ENCODE measurements at regions of chr4 and their contacts with region 1.

Region 1: DNA sequence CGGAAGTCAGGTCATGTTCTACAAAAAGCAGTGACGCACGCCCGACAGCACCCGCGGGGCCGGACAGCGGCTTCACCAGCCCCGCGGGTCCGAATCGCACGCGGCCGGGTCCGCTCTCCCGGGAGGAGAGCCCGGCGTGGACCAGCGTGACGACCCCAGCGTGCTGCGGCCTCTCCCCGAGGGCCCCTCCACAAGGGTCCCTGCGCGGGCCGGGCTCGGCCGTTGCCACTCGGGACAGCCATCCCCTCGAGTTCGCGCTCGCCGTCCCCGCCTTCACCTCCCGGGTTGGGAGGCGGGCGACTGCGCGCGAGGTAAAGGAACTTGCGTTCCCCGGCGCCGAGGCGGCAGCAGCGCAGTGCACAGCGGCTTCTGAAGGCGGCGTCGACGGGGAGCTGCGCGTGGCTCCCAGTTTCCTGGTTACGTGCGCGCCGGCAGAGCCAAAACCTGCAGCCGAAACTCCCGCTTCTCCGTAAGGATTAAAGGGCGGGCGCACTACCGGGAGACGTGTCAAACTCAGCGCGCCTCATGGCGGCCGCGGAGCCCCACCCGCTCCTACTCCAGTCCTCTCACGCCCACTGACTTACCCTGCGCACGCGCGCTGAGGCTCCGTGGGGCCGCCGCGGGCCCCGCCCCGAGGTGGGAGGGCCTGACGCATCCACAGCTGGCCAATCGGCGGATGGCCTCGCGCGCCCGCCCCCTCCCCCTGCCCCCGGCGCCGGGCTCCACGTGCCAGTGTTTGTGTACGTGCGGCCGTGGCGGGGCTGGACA is 416 bp upstream of the LRP2BP start:
- DNase-seq: peak; percentile 88 to 99
- H3K4me3 ChIP-seq: peak overlapping the region; percentile 91
- H3K27ac ChIP-seq: peak overlapping the region; percentile 98
- H3K4me1 ChIP-seq: peaks cover 16% of the 10 kb centered on the region
- H3K27me3 ChIP-seq: no peaks in the 10 kb centered on the region
- CTCF ChIP-seq: no peak

Region 2: DNA sequence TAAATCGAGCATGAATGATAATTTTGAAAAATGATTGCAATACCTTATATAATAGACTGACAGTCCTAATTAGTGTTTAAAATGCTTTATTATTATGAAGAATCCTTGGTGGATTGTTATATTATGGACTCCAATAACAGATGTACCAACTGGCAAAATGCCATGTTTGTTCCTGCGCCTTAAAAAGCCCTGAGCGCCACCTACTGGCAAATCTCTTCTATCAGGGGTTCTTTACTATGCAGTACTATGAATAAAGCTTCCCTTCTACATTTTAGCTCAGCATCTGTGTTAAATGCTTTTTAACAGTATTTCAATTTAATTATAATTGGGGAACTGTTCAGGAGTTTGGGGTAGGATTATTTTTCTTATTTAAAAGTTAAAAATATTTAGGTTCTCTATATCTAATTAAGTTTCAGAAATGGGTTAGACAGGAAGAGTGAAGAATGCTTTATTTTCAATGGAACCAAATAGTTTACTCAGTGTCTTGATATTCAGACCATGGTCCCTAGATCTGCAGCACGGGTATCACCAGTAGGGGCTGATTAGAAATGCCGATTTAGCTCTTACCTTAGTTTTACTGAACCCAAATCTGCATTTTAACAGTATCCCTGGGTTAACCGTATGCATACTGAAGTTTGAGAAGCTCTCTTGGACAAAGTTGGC is 212.4 kb before region 1 on chr4:
- CTCF ChIA-PET with region 1: no interaction called
- POLR2A ChIA-PET with region 1: interaction called, 15 read pairs
- intact Hi-C with region 1: no loop called
- DNase-seq: peak; percentile 46 to 61
- H3K4me3 ChIP-seq: no peak overlapping the region
- H3K27ac ChIP-seq: no peak overlapping the region
- H3K4me1 ChIP-seq: no peaks in the 10 kb centered on the region
- H3K27me3 ChIP-seq: no peaks in the 10 kb centered on the region
- CTCF ChIP-seq: peak; percentile 73

Region 3: GRCh38 chr4:185265942-185266341 is 130.2 kb before region 1 on chr4:
- CTCF ChIA-PET with region 1: no interaction called
- POLR2A ChIA-PET with region 1: no interaction called
- intact Hi-C with region 1: no loop called
- DNase-seq: no peak
- H3K4me3 ChIP-seq: no peak overlapping the region
- H3K27ac ChIP-seq: no peak overlapping the region
- H3K4me1 ChIP-seq: peaks cover 20% of the 10 kb centered on the region
- H3K27me3 ChIP-seq: no peaks in the 10 kb centered on the region
- CTCF ChIP-seq: no peak

Region 4: GRCh38 chr4:185276036-185276435 is 120.1 kb before region 1 on chr4:
- CTCF ChIA-PET with region 1: no interaction called
- POLR2A ChIA-PET with region 1: no interaction called
- intact Hi-C with region 1: no loop called
- DNase-seq: no peak
- H3K4me3 ChIP-seq: no peak overlapping the region
- H3K27ac ChIP-seq: no peak overlapping the region
- H3K4me1 ChIP-seq: peaks cover 10% of the 10 kb centered on the region
- H3K27me3 ChIP-seq: no peaks in the 10 kb centered on the region
- CTCF ChIP-seq: no peak

Region 5: GRCh38 chr4:185304944-185305690 is 91.0 kb before region 1 on chr4:
- CTCF ChIA-PET with region 1: no interaction called
- POLR2A ChIA-PET with region 1: interaction called, 9 read pairs
- intact Hi-C with region 1: loop called (anchors 2 kb)
- DNase-seq: no peak
- H3K4me3 ChIP-seq: no peak overlapping the region
- H3K27ac ChIP-seq: peak overlapping the region; percentile 31; the same call in 1 of the 2 replicates
- H3K4me1 ChIP-seq: peaks cover 15% of the 10 kb centered on the region
- H3K27me3 ChIP-seq: no peaks in the 10 kb centered on the region
- CTCF ChIP-seq: peak; percentile 29; the same call in 1 of the 2 replicates

Region 6: DNA sequence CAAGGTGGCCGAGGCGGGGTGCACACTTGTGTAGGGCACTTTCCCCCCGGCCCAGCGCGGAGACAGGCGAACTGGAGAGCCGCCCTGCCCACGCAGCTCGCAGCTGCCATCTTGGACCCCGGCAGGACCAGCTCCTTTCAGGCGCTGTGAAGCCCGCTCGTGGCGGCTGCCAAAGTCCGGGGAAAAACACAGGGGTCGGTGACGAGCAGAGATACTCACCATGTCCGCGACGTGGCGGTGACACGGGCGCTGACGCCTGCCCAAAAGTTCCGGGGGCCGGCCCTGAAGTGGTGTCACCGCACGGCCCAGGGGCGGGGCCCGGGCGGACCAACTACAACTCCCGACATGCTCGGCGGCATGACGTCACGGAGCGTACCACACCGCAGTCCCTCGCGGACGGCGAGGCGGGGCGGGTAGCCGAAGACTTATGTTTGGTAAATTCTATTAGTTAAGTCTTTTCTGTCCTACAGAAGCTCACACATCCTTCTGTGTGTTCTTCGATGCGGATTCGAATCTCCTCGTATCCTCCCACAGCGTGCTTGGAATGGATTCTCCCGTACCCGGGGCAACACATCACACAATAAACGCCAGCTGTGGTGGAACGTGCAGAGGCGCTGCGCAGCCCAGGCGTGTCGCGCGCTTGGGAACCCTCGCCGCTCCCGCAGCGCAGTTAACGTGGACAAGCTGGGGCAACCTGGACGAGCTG is 29.7 kb after region 1 on chr4 and contains the start of gene UFSP2:
- CTCF ChIA-PET with region 1: no interaction called
- POLR2A ChIA-PET with region 1: interaction called, 3 read pairs
- intact Hi-C with region 1: loop called (anchors 1 kb)
- DNase-seq: peak; percentile 59 to 81
- H3K4me3 ChIP-seq: peak within 1 kb of the TSS; percentile 82
- H3K27ac ChIP-seq: peak within 1 kb of the TSS; percentile 77
- H3K4me1 ChIP-seq: peaks cover 10% of the 10 kb centered on the region
- H3K27me3 ChIP-seq: no peaks in the 10 kb centered on the region
- CTCF ChIP-seq: no peak
- total RNA-seq, gene UFSP2: 22.7 and 26.8 TPM in 2 replicates

Region 7: DNA sequence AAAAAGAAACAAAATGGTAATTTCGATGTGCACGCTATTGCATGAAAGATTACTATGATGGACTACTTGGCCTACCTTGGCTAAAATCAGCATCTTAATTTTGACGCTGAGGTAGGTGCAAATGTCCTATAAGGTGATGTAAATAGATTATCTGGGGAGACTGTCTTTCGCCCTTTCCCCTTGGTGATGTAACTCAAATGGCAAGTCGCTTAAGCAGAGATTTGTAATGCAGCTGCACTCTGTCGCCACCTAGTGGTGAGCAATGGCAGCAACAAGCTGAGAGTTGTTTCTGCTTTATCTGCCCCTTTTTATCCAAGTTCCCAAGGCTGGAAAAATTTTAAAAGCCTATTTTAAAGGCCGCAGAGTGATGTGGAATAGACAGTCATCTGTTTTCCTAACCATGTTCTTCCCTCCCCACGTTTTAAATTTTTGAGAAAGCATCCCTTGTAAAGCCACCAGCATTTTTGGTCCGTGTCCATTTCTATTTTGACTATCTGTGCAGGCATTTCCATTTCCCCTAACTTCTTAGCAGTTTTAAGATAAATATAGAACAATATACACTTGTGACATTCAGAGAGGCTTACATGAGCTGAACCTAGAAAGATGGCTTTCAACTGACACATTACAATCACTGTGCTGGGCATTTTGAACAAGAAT is 201.5 kb after region 1 on chr4:
- CTCF ChIA-PET with region 1: no interaction called
- POLR2A ChIA-PET with region 1: no interaction called
- intact Hi-C with region 1: loop called (anchors 10 kb)
- DNase-seq: peak; percentile 35 to 64
- H3K4me3 ChIP-seq: no peak overlapping the region
- H3K27ac ChIP-seq: no peak overlapping the region
- H3K4me1 ChIP-seq: no peaks in the 10 kb centered on the region
- H3K27me3 ChIP-seq: no peaks in the 10 kb centered on the region
- CTCF ChIP-seq: peak; percentile 93